PC-3 (cell line): ENCODE measurements at regions of chr5 and their contacts with region 1.

Region 1: DNA sequence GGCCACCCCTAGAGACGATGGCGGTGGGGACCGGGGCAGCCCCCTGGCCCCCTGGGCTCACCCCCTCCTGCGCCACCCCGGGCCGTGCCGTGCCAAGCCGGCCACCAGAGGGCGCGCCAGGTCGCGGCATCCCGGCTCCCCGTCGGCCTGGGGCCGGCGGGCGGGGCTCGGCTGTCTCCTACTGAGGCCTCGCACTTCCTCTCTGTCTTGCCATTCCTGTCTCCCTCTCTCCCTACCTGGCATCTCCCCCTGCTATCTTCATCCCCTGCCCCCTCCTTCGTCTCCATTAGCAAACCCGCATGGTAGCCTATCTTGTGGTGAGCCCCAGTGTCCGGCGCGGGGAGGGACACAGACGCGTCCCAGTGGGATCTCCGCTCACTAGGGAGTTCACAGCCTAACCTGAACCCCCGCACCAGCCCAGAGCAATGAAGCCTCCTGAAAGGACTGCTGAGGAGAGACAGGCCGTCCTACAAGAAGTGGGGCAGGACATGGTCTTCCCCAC is 29.8 kb upstream of the FABP6 start:
- DNase-seq: peak; percentile 76
- ATAC-seq: peak; percentile 100
- H3K4me3 ChIP-seq: peak overlapping the region; percentile 61
- H3K27ac ChIP-seq: no peak overlapping the region
- H3K4me1 ChIP-seq: peaks cover 4% of the 10 kb centered on the region; the same call in 1 of the 2 replicates
- H3K27me3 ChIP-seq: no peaks in the 10 kb centered on the region
- CTCF ChIP-seq: peak; percentile 95

Region 2: GRCh38 chr5:160390787-160391696 is 191.6 kb after region 1 on chr5:
- CTCF ChIA-PET with region 1: interaction called, 3 read pairs
- POLR2A ChIA-PET with region 1: no interaction called
- intact Hi-C with region 1: loop called (anchors 1 kb)
- DNase-seq: peak; percentile 53
- ATAC-seq: peak; percentile 50; the same call in 1 of the 2 replicates
- H3K4me3 ChIP-seq: no peak overlapping the region
- H3K27ac ChIP-seq: no peak overlapping the region
- H3K4me1 ChIP-seq: no peaks in the 10 kb centered on the region
- H3K27me3 ChIP-seq: no peaks in the 10 kb centered on the region
- CTCF ChIP-seq: peak; percentile 78

Region 3: DNA sequence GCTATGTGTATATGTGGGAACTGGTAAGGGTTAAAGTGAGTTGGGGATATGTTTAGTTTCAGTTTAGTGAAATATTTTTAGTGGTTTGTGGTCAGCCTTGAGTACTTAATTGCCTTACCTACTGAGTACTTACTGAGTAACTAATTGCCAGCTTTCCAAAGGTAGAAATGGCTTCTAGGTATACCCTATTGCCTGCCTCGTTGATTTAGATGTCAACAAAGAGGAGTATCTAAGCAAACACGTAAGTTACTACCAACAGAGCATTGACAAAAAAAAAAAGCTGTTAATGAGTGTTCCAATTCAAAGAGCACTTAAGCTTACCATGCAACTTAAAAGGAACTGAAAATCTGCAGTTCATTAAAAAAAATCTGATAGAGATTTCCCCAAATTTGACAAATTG is 643.8 kb after region 1 on chr5:
- CTCF ChIA-PET with region 1: no interaction called
- POLR2A ChIA-PET with region 1: no interaction called
- intact Hi-C with region 1: no loop called
- DNase-seq: no peak
- ATAC-seq: no peak
- H3K4me3 ChIP-seq: no peak overlapping the region
- H3K27ac ChIP-seq: no peak overlapping the region
- H3K4me1 ChIP-seq: no peaks in the 10 kb centered on the region
- H3K27me3 ChIP-seq: no peaks in the 10 kb centered on the region
- CTCF ChIP-seq: no peak